ENCODE measurements at regions of chr10 and their contacts with region 1.

Region 1: DNA sequence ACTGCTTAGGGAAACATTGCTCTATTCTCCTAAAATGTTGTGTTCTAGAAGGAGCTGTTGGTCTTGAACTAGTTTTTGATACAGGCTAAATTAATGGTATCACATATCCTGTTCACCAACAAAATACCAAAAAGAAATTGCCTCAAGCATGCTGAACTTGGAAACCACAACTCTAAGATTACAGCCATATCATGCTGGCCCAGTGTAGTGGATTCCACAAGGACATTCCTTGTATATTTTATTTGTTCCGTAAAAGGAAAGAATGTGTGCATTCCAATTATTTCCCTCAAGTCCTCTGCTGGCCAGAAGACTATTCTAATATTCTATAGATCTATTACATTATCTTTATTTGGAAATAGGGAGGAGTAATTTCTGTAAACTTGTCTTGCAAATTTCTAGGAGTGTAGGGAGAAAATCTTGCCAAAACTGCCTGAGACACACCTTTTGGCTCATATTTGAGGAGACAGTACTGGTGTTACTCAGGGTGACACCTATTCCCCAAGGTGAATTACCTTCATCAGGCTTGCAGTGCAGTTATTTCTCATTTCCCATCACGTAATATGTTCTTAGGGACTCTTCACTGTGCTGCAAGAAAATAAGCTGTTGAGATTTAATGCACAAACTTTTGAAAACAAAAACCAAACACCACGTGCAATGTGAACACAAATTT is 1.9 kb upstream of the NEBL start:
- DNase-seq: no peak

Region 2: DNA sequence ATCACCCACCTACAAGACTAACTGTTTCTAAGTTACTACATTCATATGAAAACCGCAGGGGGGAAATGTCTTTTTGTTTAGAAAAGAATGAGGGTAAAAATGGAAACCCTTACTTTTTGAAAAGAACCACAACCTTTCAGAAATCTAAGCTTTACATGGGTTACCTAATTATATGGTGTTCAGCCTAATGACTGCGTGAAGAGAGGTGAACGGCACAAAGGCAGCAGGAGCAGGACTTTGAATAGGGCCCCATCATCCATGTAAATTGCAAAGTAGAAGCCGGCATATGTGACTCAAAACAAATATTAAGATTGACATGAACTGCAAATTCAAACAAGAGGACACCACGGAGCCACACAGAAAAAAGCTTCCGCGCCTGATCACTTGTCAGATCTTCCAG is 27.0 kb before region 1 on chr10:
- intact Hi-C with region 1: no loop called
- DNase-seq: no peak

Region 3: DNA sequence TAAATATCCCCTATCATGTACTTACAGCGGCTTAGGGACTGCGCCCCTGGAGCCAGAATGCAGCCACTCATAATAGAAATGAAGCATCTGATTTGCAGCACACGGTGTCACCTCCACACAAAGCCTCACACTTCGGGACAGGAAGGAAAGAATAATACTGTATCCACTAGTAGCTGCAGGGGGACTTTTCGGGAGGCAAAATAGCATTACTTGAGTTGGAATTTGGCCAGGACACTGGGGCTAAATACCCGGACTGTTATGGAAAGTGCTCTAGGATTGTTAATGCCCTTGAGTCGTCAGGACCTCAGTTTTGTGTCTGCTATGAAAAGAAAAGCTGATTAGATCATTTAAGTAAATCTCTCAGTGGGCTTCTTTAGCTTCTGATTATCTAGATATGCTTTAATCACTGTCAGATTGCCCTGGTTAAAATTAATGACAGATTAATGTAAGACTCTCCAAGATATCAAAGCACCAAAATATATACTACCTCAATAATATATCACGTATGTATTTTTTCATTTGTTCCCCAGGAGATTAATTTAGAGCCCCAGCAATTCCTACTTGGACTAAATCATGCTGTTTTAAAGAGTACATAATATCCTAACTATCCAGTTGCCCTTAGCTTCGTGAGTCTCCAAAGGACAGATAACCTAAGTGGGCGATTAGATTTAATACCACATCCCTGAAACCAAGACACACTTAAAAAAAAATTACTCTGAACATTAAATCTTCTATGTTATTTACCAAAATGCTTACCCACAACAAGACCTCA is 171.1 kb after region 1 on chr10:
- intact Hi-C with region 1: loop called (anchors 5 kb)
- DNase-seq: no peak

Region 4: GRCh38 chr10:21173812-21174714 is 275.1 kb after region 1 on chr10:
- intact Hi-C with region 1: loop called (anchors 10 kb)
- DNase-seq: no peak

Measured in cardiac septum (tissue), 1 donor.